SK-N-SH (cell line): ENCODE measurements at regions of chr2 and their contacts with region 1.

Region 1: DNA sequence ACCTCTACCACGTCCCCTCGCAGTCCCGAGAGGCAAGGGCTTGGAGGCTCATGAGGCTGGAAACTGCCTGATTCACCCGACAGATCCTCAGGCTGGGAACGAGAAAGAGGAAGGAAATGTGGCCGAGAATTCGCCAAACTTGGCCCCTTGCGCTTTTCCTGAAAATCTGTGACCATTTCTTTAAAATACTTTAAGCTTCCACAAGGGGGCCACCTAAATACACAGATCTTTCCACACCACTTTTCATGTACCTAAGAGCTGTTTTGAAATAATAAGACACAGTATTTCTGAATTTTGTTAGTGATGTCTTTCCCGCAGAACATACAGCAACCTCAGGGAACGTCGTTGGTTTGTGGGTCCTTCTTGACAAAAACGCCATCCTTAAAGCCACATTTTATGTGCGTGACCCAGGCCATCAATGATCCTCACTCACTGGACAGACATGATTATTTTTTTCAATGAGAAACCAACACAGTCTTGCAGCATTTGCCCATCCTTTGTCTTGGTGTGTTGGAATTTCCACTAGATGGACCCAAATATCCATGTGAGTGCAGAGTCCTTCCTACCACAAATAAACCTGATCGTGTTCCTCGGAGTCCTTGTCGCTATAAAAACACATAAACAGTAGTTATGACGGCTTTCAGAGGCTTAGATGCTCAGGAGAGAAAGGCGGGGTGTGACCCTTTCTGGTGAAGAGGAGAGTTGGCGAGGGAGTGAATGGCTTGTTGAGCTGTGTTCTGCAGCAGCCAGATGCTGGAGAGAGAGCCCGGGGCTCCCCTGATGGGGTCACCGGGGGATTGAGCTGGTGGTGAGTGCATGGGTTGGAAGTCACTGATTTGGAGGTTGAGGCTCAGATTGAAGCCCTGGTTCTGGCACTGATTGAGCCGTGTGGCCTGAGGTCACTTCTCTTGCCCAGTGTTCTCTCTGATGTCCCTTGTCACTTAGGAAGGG is 25.0 kb downstream of the DCDC2C start:
- DNase-seq: peak; percentile 77
- H3K4me3 ChIP-seq: peak overlapping the region in 1 of 2 experiments; percentile 2; a peak in 1 of 4 replicates
- H3K27ac ChIP-seq: no peak overlapping the region
- H3K4me1 ChIP-seq: peaks cover 0 to 6% of the 10 kb centered on the region in 2 experiments; a peak in 1 of 4 replicates
- H3K27me3 ChIP-seq: no peaks in the 10 kb centered on the region
- CTCF ChIP-seq: peak; percentile 71
- EP300 ChIP-seq: no peak
- RAD21 ChIP-seq: peak; percentile 83

Region 2: DNA sequence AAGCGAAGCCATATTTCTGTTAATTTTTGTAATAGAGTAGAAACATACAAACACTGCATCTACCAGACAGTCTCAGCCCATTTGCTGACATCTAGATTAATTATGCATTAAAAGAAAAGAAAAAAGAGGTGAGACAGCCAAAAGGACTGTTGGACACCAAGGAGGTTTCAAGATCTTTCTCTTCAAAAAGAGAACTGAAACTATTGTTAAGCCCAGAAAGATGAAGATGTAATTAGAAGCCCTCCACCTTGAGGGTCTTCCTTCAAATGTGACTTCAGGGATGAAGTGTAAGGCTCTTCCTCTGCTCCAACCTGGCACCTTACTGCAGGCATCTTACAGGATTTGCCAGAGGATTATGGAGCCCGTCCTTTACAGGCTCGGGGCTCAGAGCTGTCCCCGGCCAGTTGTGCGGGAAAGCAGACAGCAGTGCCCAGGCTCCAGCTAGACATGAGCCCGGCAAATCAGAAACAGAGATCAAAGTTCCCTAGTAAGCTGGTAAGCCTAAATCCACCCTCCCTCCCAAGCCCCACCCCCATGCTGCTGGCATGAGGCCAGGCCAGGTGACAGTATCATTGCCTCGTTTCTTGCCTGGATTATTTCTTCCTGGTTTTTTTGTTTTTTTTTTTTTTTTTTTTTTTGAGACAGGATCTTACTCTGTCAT is 247.9 kb before region 1 on chr2:
- CTCF ChIA-PET with region 1: no interaction called
- POLR2A ChIA-PET with region 1: no interaction called
- DNase-seq: no peak
- H3K4me3 ChIP-seq: no peak overlapping the region
- H3K27ac ChIP-seq: no peak overlapping the region
- H3K4me1 ChIP-seq: peaks cover 0 to 2% of the 10 kb centered on the region in 2 experiments; a peak in 1 of 4 replicates
- H3K27me3 ChIP-seq: no peaks in the 10 kb centered on the region
- CTCF ChIP-seq: no peak
- EP300 ChIP-seq: no peak
- RAD21 ChIP-seq: no peak

Region 3: DNA sequence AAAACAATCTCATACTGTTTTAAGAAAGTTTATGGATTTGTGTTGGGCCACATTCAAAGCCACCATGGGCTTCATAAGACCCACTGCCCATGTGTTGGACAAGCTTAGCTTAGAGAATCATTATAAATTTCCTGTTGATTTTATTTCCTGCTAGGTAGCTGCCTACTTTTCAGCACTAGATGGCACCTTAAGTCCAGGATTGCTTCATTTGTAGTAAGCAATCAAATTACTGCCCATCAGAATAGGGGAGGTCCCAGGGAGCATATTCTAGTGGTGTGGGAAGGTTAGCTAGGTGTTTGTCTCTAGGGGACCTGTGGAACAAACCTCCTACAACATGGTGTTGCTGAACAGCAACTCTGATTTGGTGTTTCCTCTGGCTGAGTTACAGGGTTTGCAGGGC is 36.0 kb before region 1 on chr2:
- CTCF ChIA-PET with region 1: interaction called, 11 read pairs
- POLR2A ChIA-PET with region 1: no interaction called
- DNase-seq: peak; percentile 68
- H3K4me3 ChIP-seq: no peak overlapping the region
- H3K27ac ChIP-seq: no peak overlapping the region
- H3K4me1 ChIP-seq: no peaks in the 10 kb centered on the region
- H3K27me3 ChIP-seq: no peaks in the 10 kb centered on the region
- CTCF ChIP-seq: peak; percentile 45
- EP300 ChIP-seq: no peak
- RAD21 ChIP-seq: peak; percentile 78

Region 4: GRCh38 chr2:3712831-3713503 is 15.4 kb before region 1 on chr2:
- CTCF ChIA-PET with region 1: interaction called, 42 read pairs
- POLR2A ChIA-PET with region 1: no interaction called
- DNase-seq: no peak
- H3K4me3 ChIP-seq: no peak overlapping the region
- H3K27ac ChIP-seq: no peak overlapping the region
- H3K4me1 ChIP-seq: no peaks in the 10 kb centered on the region
- H3K27me3 ChIP-seq: no peaks in the 10 kb centered on the region
- CTCF ChIP-seq: no peak
- EP300 ChIP-seq: no peak
- RAD21 ChIP-seq: no peak

Region 5: DNA sequence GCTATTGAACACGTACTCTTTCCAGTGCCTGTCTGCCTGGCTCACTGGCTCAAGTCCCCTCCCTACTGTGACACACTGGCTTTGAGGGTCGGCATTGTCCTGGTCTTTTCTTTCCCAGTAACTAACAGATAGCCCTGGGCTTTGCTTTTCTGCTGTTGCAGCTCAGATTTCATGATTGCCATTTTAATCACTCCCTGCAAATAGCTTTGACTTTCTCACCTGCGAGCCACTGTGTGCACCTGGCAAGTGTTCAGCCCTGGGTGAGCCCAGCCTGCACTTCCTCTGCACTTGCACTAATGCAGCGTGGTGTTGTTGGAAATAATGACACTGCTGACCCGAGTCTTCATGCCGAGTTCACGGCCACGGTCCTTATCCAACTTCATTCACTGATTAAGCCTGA is 27.9 kb after region 1 on chr2:
- CTCF ChIA-PET with region 1: interaction called, 70 read pairs
- POLR2A ChIA-PET with region 1: no interaction called
- DNase-seq: no peak
- H3K4me3 ChIP-seq: no peak overlapping the region
- H3K27ac ChIP-seq: no peak overlapping the region
- H3K4me1 ChIP-seq: no peaks in the 10 kb centered on the region
- H3K27me3 ChIP-seq: no peaks in the 10 kb centered on the region
- CTCF ChIP-seq: no peak
- EP300 ChIP-seq: no peak
- RAD21 ChIP-seq: no peak

Region 6: DNA sequence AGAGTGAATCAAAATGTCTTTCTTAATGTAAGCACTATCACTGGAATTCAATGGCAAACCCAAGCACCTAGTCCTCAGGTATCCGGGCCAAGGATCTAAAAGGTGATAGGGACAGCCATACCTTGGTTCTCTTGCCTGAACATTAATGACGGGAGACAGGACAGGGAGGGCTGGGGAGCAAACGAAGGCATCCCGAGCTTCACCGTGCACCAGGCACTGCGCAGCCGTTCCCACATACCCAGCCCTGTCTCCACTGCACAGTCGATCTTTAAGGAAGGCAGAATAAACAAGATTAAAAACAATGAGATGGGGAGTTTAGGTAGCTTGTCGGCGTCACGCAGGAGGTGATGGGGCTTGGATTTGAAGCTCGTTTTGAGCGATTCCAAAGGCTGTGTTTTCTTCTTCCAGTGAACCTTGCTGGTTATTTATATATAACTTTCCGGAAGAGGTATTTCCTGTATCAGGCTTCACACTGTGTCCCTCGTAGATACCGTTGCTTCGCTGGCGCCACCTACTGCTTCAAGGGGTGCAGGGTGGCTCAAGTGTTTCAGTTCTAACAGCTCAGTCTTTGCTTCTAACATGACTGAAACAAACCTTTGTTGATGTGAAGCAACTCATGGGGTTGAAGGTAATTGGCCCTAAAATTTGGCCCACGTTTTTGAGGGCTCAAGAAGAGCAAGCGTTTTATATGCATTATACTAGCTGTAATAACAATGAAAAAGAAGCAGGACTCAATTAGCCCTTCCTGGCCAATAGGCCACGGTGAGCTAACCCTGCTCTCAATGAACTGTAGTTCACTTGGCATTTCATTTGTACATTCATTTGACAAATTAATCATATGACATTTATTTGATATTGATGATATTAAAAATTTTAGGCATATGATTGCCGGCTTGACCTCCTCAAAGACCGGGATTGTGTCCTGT is 52.4 kb after region 1 on chr2:
- CTCF ChIA-PET with region 1: interaction called, 218 read pairs
- POLR2A ChIA-PET with region 1: interaction called, 3 read pairs
- DNase-seq: peak; percentile 87
- H3K4me3 ChIP-seq: peak overlapping the region in 1 of 2 experiments; percentile 46; a peak in 2 of 4 replicates
- H3K27ac ChIP-seq: no peak overlapping the region
- H3K4me1 ChIP-seq: peaks cover 0 to 3% of the 10 kb centered on the region in 2 experiments; a peak in 2 of 4 replicates
- H3K27me3 ChIP-seq: no peaks in the 10 kb centered on the region
- CTCF ChIP-seq: peak; percentile 39
- EP300 ChIP-seq: no peak
- RAD21 ChIP-seq: peak; percentile 74

Region 7: GRCh38 chr2:3827673-3828575 is 99.5 kb after region 1 on chr2:
- CTCF ChIA-PET with region 1: interaction called, 85 read pairs
- POLR2A ChIA-PET with region 1: no interaction called
- DNase-seq: peak; percentile 56
- H3K4me3 ChIP-seq: no peak overlapping the region; a peak in 1 of 4 replicates
- H3K27ac ChIP-seq: no peak overlapping the region
- H3K4me1 ChIP-seq: no peaks in the 10 kb centered on the region
- H3K27me3 ChIP-seq: no peaks in the 10 kb centered on the region
- CTCF ChIP-seq: peak; percentile 47
- EP300 ChIP-seq: no peak
- RAD21 ChIP-seq: peak; percentile 54